BJ (cell line): ENCODE measurements at regions of chr3 and their contacts with region 1.

Region 1: GRCh38 chr3:125280668-125281361 is 68.3 kb upstream of the SLC12A8 start:
- DNase-seq: no peak
- H3K4me3 ChIP-seq: no peak overlapping the region
- H3K27me3 ChIP-seq: no peaks in the 10 kb centered on the region
- CTCF ChIP-seq: no peak

Region 2: DNA sequence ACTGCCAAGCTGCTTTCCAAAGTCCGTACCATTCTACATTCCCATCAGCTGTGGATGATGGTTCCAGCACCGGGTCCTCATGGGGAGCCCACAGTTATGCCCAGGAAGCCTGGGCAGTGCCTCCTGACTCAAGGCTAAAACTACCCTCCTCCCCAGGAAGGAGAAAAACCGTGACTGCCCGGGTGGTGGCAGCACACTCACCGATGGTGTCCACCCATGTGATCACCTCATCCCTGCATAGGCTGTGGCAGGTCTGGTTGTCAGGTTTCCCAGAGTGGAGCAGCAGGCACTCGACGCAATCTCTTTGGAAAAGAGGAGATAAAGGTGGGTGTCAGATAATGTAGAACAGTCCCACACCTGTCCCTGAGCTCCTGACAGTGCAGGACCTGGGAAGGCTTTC is 512.0 kb before region 1 on chr3:
- CTCF ChIA-PET with region 1: no interaction called
- POLR2A ChIA-PET with region 1: interaction called, 24 read pairs
- DNase-seq: no peak
- H3K4me3 ChIP-seq: no peak overlapping the region
- H3K27me3 ChIP-seq: no peaks in the 10 kb centered on the region
- CTCF ChIP-seq: no peak

Region 3: DNA sequence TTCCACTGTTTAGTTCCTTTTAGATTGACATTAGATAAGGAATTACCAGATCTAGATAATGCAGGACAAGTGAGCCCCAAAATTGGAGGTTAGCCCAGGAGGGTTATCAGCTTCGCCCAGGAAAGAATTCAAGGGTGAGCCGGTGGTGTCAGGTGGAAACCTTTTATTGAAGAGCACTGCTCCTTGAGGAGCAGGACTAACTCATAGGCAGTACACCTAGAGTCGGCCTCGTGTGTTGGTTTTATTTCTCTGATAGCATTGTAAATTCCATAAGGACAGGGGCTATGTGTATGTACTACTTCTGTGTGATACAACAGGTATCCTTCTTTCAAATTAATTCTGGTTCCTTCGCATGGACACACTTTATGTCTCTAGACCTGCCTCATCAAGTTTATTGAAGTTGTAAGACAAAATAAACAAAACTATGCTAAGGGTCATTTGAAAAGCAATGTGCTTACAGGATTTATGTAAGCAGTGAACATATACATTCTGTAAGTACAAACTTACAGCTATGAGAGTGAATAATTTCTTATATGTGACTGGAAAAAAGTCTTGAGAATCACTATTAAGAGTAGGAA is 182.0 kb after region 1 on chr3:
- CTCF ChIA-PET with region 1: no interaction called
- POLR2A ChIA-PET with region 1: no interaction called
- DNase-seq: no peak
- H3K4me3 ChIP-seq: no peak overlapping the region
- H3K27me3 ChIP-seq: no peaks in the 10 kb centered on the region
- CTCF ChIP-seq: no peak